Heart left ventricle (tissue), 16 donors: ENCODE measurements at regions of chr9 and their contacts with region 1.

Region 1: DNA sequence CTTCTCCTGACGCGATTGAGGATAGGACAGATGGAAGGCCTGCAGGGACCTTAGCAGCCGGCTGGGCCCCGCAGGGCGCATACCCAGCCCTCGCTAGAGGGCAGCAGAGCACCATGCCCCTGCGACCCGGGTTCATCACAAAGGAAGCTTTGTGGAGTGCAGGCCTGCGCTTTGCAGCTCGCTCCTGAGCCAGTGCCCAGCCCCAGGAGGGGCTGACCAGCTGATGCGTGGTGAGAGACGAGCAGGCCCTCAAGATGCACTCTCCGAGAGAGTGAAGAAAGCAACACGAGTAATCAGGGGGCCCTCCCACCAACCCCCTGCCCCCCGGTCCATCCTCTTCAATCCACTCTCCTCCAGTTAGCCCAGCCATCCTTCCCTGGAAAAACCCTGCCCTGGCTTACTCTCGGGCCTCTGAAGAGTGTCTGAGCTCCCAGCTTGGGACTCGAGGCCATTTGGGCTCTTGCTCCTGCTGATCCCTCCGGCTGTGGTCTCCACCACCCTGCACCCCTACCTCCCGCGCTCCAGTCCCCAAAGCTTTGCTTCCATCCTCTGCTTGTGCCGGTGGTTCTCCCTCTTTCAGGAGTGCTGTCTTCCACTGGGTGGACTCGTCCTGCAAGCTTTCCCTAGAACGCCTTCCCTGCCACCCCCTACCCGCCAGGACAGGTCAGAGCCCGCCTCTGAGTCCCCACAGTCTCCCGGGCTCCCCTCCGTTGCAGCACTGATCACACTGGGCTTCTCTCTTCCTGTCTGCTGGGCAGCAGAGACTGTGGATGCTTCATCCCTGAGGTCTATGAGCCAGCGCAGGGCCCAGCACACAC is 9.1 kb upstream of the KIF12 start:
- DNase-seq: peak; percentile 77 to 89 (median 80)
- ATAC-seq: peak; percentile 89 to 98 (median 97)
- H3K4me3 ChIP-seq: no peak overlapping the region
- H3K27ac ChIP-seq: no peak overlapping the region
- H3K4me1 ChIP-seq: peaks cover 0 to 18% (median 2%) of the 10 kb centered on the region in 12 donors
- H3K27me3 ChIP-seq: no peaks in the 10 kb centered on the region
- CTCF ChIP-seq: peak; percentile 87 to 97 (median 90)
- POLR2A ChIP-seq: no peak

Region 2: DNA sequence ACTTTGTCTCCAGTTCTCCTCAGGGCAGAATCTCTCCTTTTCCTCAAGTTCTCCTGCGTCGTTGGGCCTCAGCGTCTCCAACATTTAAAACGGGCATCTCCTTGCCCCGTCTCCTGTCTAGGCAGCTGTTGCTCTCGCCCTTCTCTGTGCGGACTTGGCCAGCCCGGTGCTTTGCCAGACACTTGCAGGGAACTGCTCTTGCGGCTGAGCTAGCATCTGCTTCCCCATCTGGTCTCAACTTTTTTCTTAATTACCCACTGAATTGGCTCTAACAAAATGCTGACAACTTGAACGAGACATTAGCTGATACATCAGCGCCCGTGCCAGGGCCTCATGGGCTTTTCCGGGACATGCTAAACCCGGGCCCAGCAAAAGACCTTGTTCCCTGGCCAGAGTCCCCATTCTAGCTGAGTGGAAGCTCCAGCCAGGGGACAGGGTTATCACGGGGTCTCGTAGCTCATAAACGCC is 207.0 kb before region 1 on chr9:
- intact Hi-C with region 1: no loop called
- DNase-seq: no peak
- ATAC-seq: no peak
- H3K4me3 ChIP-seq: no peak overlapping the region
- H3K27ac ChIP-seq: no peak overlapping the region
- H3K4me1 ChIP-seq: peaks cover 0 to 10% (median 0%) of the 10 kb centered on the region in 12 donors
- H3K27me3 ChIP-seq: no peaks in the 10 kb centered on the region
- CTCF ChIP-seq: no peak
- POLR2A ChIP-seq: no peak

Region 3: DNA sequence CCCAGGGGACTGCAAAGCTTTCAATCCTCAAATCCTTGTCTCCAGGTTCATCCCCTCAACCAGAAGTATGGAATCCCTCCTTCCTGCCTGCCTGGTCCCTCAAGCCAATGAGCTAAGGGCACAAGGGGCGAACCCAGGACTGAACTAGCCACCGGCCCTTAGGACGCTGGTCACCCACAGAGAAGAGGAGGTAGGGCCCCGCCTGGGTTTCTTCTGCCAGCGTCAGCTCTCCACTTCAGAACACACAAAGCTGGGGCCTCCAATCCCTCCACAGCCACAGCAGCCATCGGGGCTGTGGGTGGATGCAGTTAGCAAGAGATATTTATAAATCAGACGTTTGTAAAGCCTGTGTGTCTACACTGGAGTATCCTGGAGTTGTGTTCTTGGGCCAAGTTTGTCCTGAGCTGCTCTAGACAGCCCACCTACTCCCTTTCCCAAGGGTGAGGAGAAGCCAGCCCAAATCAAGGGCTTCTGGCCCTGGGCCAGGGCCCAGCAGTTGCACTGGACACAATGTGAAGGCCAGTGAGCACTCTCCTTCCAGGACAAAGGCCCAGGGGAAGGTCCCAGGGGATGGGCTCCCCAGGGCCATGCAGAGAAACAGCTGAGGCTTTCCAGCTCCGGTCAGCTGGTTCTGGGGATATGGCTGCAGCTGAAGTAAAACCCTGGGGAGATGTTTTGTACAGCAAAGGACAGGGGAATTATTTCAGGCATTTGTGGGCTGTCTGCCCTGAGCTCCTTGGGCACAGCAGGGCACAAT is 49.0 kb before region 1 on chr9:
- intact Hi-C with region 1: no loop called
- DNase-seq: peak; percentile 38 to 79 (median 55)
- ATAC-seq: peak; percentile 47 to 84 (median 60)
- H3K4me3 ChIP-seq: no peak overlapping the region
- H3K27ac ChIP-seq: no peak overlapping the region
- H3K4me1 ChIP-seq: peaks cover 0 to 17% (median 5%) of the 10 kb centered on the region in 12 donors
- H3K27me3 ChIP-seq: peaks cover 0 to 5% (median 0%) of the 10 kb centered on the region in 9 donors
- CTCF ChIP-seq: no peak
- POLR2A ChIP-seq: no peak

Region 4: GRCh38 chr9:114082017-114082762 is 26.0 kb before region 1 on chr9:
- intact Hi-C with region 1: loop called in 1 of 10 experiments (anchors 1 kb)
- DNase-seq: peak; percentile 75 to 87 (median 84)
- ATAC-seq: peak; percentile 75 to 95 (median 90)
- H3K4me3 ChIP-seq: no peak overlapping the region
- H3K27ac ChIP-seq: no peak overlapping the region
- H3K4me1 ChIP-seq: peaks cover 0 to 5% (median 0%) of the 10 kb centered on the region in 12 donors
- H3K27me3 ChIP-seq: peaks cover 0 to 11% (median 0%) of the 10 kb centered on the region in 9 donors
- CTCF ChIP-seq: peak; percentile 83 to 95 (median 90)
- POLR2A ChIP-seq: no peak

Region 5: GRCh38 chr9:114263853-114264510 is 155.8 kb after region 1 on chr9:
- intact Hi-C with region 1: loop called in 1 of 10 experiments (anchors 5 kb)
- DNase-seq: no peak
- ATAC-seq: peak in 3 of 4 donors; percentile 25 to 47 (median 44)
- H3K4me3 ChIP-seq: no peak overlapping the region
- H3K27ac ChIP-seq: no peak overlapping the region
- H3K4me1 ChIP-seq: peaks cover 0 to 8% (median 0%) of the 10 kb centered on the region in 12 donors
- H3K27me3 ChIP-seq: no peaks in the 10 kb centered on the region
- CTCF ChIP-seq: peak in 7 of 12 donors; percentile 13 to 51 (median 32)
- POLR2A ChIP-seq: no peak

Region 6: DNA sequence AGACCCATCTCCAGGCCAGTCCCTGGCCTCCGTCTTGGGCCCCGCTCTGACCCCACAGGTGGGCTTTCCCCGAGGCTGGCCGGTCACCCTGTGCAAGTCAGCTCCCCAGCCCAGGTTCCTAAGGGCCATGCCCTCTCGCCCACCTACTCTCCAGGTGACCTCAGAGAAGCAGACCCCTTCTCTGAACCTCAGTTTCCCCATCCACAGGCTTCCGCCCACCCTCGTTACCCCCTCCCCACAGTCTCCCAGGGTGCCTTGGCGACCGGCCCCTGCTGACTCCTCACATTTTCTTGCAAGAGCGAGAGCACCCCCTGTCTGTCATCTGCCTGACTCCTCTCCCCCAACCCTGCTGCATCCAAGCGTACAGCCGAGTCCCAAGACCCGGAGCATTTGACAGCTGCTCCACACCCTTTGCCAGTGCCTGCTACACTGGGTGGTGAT is 163.4 kb after region 1 on chr9:
- intact Hi-C with region 1: loop called in 6 of 10 experiments (anchors 1 to 5 kb)
- DNase-seq: peak; percentile 45 to 68 (median 60)
- ATAC-seq: peak; percentile 55 to 84 (median 70)
- H3K4me3 ChIP-seq: no peak overlapping the region
- H3K27ac ChIP-seq: no peak overlapping the region
- H3K4me1 ChIP-seq: no peaks in the 10 kb centered on the region
- H3K27me3 ChIP-seq: no peaks in the 10 kb centered on the region
- CTCF ChIP-seq: peak; percentile 8 to 60 (median 47)
- POLR2A ChIP-seq: no peak

Region 7: GRCh38 chr9:114291064-114291474 is 182.8 kb after region 1 on chr9:
- intact Hi-C with region 1: loop called in 9 of 10 experiments (anchors 1 to 5 kb)
- DNase-seq: peak; percentile 46 to 83 (median 59)
- ATAC-seq: peak in 3 of 4 donors; percentile 38 to 62 (median 49)
- H3K4me3 ChIP-seq: no peak overlapping the region
- H3K27ac ChIP-seq: no peak overlapping the region
- H3K4me1 ChIP-seq: no peaks in the 10 kb centered on the region
- H3K27me3 ChIP-seq: no peaks in the 10 kb centered on the region
- CTCF ChIP-seq: peak; percentile 77 to 96 (median 93)
- POLR2A ChIP-seq: no peak